Endothelial cell of umbilical vein (primary cell): ENCODE measurements at regions of chr16 and their contacts with region 1.

Region 1: GRCh38 chr16:52251495-52251894 is 295.4 kb downstream of the TOX3 start:
- DNase-seq: peak; percentile 2
- H3K4me3 ChIP-seq: no peak overlapping the region
- H3K27ac ChIP-seq: no peak overlapping the region
- H3K4me1 ChIP-seq: peaks cover 11% of the 10 kb centered on the region
- H3K27me3 ChIP-seq: no peaks in the 10 kb centered on the region
- CTCF ChIP-seq: no peak
- POLR2A ChIP-seq: no peak

Region 2: DNA sequence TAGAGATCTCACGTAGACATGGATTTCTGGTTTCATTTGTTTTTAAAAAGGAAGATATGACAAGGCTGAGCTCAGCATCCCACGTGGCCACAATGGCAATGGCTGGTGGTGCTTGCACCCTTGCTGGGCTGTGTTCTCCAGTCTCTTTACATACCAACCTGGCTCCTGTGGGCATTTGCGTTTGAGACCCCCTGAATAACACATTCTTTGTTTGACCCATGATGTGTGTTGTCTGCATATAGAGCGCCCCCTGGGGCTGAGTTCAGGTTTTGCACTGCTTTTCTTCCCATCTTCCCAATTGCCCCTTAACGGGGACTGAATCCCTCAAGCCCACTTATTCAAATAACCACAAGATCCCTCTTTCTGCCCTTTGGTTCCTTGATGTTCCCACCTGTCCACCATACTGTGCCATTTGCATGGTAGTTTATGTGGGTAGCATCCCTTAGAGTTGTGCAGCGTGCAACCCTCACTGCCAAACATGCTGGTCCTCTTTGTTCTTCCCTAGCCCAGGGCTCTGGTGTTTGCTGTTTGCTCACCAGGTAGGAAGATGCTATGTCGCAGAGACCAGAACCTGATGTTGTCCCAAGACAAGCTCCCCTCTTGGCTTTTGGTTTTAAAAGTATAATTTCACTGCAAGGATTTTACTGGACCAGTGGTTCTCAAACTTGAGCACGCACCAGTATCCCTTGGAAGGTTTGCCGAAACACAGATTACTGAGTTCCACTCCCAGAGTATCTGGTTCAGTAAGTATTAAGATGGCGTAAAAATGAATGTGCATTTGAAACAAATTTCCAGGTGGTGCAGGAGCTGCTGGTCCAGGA is 1741.8 kb before region 1 on chr16:
- CTCF ChIA-PET with region 1: no interaction called
- POLR2A ChIA-PET with region 1: no interaction called
- dilution Hi-C with region 1: no loop called
- intact Hi-C with region 1: loop called (anchors 10 kb)
- DNase-seq: peak; percentile 42
- H3K4me3 ChIP-seq: no peak overlapping the region
- H3K27ac ChIP-seq: no peak overlapping the region
- H3K4me1 ChIP-seq: no peaks in the 10 kb centered on the region
- H3K27me3 ChIP-seq: no peaks in the 10 kb centered on the region
- CTCF ChIP-seq: peak; percentile 66 to 69
- POLR2A ChIP-seq: no peak